CD8-positive, alpha-beta T cell (primary cell): ENCODE measurements at regions of chr11 and their contacts with region 1.

Region 1: GRCh38 chr11:73350908-73351636 is 25.1 kb upstream of the RELT start:
- DNase-seq: peak; percentile 36 to 84 (median 59)
- ATAC-seq: peak; percentile 98
- H3K4me3 ChIP-seq: no peak overlapping the region
- H3K4me3 Mint-ChIP-seq: no peak overlapping the region
- H3K27ac ChIP-seq: peak overlapping the region in 1 of 2 experiments; percentile 31
- H3K27ac Mint-ChIP-seq: no peak overlapping the region
- H3K4me1 ChIP-seq: no peaks in the 10 kb centered on the region
- H3K4me1 Mint-ChIP-seq: peaks cover 4% of the 10 kb centered on the region
- H3K27me3 ChIP-seq: no peaks in the 10 kb centered on the region
- H3K27me3 Mint-ChIP-seq: peaks cover 4% of the 10 kb centered on the region
- CTCF ChIP-seq: peak; percentile 99

Region 2: DNA sequence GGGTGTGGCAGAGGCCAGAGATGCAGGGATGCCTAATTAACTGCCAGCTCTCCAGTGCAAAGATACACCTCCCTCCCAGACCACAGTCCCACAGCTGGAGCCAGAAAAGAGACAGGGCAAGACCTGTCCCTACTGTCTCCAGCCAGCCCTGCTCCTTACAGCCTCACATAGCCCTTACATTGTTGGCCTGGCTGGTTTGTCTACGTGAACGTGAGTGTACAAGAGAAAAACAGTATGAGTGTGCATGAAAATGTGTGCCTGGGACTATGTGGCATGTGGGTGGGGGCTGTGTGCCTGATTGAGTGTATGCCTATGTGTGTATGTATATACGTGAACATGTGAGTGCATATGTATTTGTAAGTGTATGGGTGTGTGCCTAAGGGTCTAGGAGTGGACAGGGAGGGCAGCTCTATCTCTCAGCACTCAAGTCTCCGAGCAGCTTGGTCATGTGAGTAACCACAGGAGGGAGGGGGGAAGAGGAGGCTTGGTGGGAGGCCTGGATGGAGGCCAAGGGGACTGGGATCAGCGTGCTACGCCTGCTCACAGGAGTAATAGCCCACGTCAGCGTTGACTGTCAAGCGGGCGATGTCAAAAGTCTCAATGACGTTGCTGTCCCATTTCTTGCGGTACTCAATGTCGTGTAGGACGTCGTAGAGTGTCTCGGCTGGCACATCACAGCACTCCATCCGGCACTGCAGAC is 592.2 kb before region 1 on chr11:
- CTCF ChIA-PET with region 1: no interaction called
- POLR2A ChIA-PET with region 1: no interaction called
- intact Hi-C with region 1: no loop called
- DNase-seq: no peak
- ATAC-seq: no peak
- H3K4me3 ChIP-seq: no peak overlapping the region
- H3K4me3 Mint-ChIP-seq: no peak overlapping the region
- H3K27ac ChIP-seq: no peak overlapping the region
- H3K27ac Mint-ChIP-seq: no peak overlapping the region
- H3K4me1 ChIP-seq: no peaks in the 10 kb centered on the region
- H3K4me1 Mint-ChIP-seq: no peaks in the 10 kb centered on the region
- H3K27me3 ChIP-seq: no peaks in the 10 kb centered on the region
- H3K27me3 Mint-ChIP-seq: no peaks in the 10 kb centered on the region
- CTCF ChIP-seq: no peak

Region 3: DNA sequence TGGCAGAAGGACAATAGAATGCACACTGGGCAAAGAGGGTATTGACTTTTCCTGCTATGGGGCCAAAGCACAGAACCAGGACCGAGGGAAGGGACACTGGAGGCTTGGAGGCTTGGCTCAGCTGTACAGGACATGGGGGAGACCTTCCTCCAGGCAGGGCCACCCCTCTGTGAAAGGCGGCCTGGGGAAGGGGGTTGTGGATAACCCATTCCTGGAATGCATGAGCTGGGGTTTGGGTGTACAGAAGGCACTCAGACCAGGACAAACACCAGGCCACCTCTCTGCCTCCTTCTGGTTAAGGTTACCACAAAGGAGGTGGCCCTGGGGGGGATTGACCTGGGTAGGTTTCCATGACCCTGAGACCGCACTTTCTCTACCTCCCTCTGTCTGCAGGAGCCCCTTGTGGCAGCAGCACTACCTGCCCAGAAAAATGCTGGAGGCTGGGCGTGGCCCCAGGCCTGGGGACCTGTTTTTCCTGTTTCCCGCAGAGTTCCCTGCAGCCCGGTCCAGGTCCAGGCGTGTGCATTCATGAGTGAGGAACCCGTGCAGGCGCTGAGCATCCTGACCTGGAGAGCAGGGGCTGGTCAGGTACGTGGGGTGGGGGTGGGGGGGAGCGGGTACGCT is 123.4 kb before region 1 on chr11:
- CTCF ChIA-PET with region 1: no interaction called
- POLR2A ChIA-PET with region 1: no interaction called
- intact Hi-C with region 1: no loop called
- DNase-seq: no peak
- ATAC-seq: no peak
- H3K4me3 ChIP-seq: no peak overlapping the region
- H3K4me3 Mint-ChIP-seq: no peak overlapping the region
- H3K27ac ChIP-seq: no peak overlapping the region
- H3K27ac Mint-ChIP-seq: no peak overlapping the region
- H3K4me1 ChIP-seq: no peaks in the 10 kb centered on the region
- H3K4me1 Mint-ChIP-seq: no peaks in the 10 kb centered on the region
- H3K27me3 ChIP-seq: no peaks in the 10 kb centered on the region
- H3K27me3 Mint-ChIP-seq: peaks cover 9% of the 10 kb centered on the region
- CTCF ChIP-seq: no peak

Region 4: GRCh38 chr11:73307323-73308002 is 43.6 kb before region 1 on chr11:
- CTCF ChIA-PET with region 1: interaction called, 10 read pairs
- POLR2A ChIA-PET with region 1: no interaction called
- intact Hi-C with region 1: no loop called
- DNase-seq: peak; percentile 77 to 94 (median 89)
- ATAC-seq: peak; percentile 71
- H3K4me3 ChIP-seq: peak overlapping the region; percentile 62 to 77
- H3K4me3 Mint-ChIP-seq: peak overlapping the region; percentile 86
- H3K27ac ChIP-seq: no peak overlapping the region
- H3K27ac Mint-ChIP-seq: no peak overlapping the region
- H3K4me1 ChIP-seq: peaks cover 9% of the 10 kb centered on the region
- H3K4me1 Mint-ChIP-seq: peaks cover 10% of the 10 kb centered on the region
- H3K27me3 ChIP-seq: peaks cover 11 to 12% of the 10 kb centered on the region in 2 experiments
- H3K27me3 Mint-ChIP-seq: peaks cover 15% of the 10 kb centered on the region
- CTCF ChIP-seq: peak; percentile 46

Region 5: DNA sequence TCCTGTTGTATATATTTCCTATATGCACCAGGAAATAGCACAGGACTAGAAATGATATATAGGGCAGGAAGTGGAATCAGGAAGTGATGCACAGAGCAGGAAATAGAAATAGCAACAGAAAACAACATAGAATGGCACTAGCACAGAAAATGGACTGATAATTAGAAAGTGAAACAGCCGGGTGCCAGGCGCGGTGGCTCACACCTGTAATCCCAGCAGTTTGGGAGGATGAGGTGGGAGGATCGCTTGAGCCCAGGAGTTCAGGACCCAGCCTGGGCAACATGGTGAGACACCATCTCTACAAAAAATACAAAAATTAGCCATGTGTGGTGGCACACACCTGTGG is 15.2 kb after region 1 on chr11:
- CTCF ChIA-PET with region 1: interaction called, 130 read pairs
- POLR2A ChIA-PET with region 1: interaction called, 11 read pairs
- intact Hi-C with region 1: no loop called
- DNase-seq: peak in 6 of 9 experiments; percentile 23 to 81 (median 58)
- ATAC-seq: peak; percentile 92
- H3K4me3 ChIP-seq: peak overlapping the region; percentile 18 to 27
- H3K4me3 Mint-ChIP-seq: peak overlapping the region; percentile 68
- H3K27ac ChIP-seq: peak overlapping the region; percentile 65 to 86
- H3K27ac Mint-ChIP-seq: peak overlapping the region; percentile 94
- H3K4me1 ChIP-seq: peaks cover 29% of the 10 kb centered on the region
- H3K4me1 Mint-ChIP-seq: peaks cover 35% of the 10 kb centered on the region
- H3K27me3 ChIP-seq: no peaks in the 10 kb centered on the region
- H3K27me3 Mint-ChIP-seq: no peaks in the 10 kb centered on the region
- CTCF ChIP-seq: no peak

Region 6: DNA sequence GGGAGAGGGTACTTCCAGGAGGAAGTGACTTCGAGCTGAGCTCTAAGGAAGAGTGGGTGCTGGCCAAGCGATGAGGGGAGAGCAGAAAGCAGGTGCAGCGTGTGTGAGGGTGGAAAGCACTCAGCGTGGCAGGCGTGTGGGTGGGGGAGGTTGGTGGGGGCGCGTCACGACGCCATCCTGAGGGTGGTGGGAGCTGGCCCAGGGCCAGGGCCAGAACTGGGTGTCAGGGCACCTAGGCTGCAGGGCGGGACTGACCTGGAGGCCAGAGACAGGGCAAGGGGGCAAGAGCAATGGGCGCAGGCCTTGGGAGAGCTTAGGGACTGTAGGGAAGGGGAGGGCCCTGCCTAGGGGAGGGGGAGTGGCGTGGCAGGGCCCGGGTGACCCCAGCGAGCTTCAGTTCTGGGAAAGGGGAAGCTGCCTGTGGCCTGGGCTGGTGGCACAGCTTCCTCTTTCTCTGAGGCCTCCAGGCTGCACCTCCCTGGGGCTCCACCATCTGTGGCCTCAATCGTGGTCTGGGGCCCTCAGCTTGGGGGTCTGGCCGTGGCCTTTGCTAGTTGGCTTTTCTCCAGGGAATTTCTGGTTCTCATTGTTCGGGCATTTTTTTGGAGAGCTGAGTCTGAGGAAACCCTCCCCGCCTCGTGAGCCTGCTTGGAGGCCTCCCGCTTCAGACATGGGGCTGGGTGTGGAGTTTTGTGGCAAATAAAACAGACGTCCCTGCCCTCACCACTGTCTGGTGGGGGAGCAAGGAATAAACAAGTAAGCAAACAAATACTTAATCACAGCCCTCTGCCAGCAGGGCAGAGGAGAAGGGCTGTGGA is 34.0 kb after region 1 on chr11:
- CTCF ChIA-PET with region 1: interaction called, 233 read pairs
- POLR2A ChIA-PET with region 1: no interaction called
- intact Hi-C with region 1: no loop called
- DNase-seq: peak in 4 of 9 experiments; percentile 23 to 53 (median 42)
- ATAC-seq: peak; percentile 39
- H3K4me3 ChIP-seq: no peak overlapping the region
- H3K4me3 Mint-ChIP-seq: peak overlapping the region; percentile 37
- H3K27ac ChIP-seq: no peak overlapping the region
- H3K27ac Mint-ChIP-seq: peak overlapping the region; percentile 66
- H3K4me1 ChIP-seq: peaks cover 43% of the 10 kb centered on the region
- H3K4me1 Mint-ChIP-seq: peaks cover 62% of the 10 kb centered on the region
- H3K27me3 ChIP-seq: no peaks in the 10 kb centered on the region
- H3K27me3 Mint-ChIP-seq: no peaks in the 10 kb centered on the region
- CTCF ChIP-seq: no peak

Region 7: GRCh38 chr11:73404048-73404447 is 53.0 kb after region 1 on chr11:
- CTCF ChIA-PET with region 1: interaction called, 36 read pairs
- POLR2A ChIA-PET with region 1: no interaction called
- intact Hi-C with region 1: no loop called
- DNase-seq: peak in 1 of 9 experiments; percentile 22
- ATAC-seq: no peak
- H3K4me3 ChIP-seq: no peak overlapping the region
- H3K4me3 Mint-ChIP-seq: no peak overlapping the region
- H3K27ac ChIP-seq: no peak overlapping the region
- H3K27ac Mint-ChIP-seq: no peak overlapping the region
- H3K4me1 ChIP-seq: no peaks in the 10 kb centered on the region
- H3K4me1 Mint-ChIP-seq: no peaks in the 10 kb centered on the region
- H3K27me3 ChIP-seq: no peaks in the 10 kb centered on the region
- H3K27me3 Mint-ChIP-seq: no peaks in the 10 kb centered on the region
- CTCF ChIP-seq: no peak

Region 8: DNA sequence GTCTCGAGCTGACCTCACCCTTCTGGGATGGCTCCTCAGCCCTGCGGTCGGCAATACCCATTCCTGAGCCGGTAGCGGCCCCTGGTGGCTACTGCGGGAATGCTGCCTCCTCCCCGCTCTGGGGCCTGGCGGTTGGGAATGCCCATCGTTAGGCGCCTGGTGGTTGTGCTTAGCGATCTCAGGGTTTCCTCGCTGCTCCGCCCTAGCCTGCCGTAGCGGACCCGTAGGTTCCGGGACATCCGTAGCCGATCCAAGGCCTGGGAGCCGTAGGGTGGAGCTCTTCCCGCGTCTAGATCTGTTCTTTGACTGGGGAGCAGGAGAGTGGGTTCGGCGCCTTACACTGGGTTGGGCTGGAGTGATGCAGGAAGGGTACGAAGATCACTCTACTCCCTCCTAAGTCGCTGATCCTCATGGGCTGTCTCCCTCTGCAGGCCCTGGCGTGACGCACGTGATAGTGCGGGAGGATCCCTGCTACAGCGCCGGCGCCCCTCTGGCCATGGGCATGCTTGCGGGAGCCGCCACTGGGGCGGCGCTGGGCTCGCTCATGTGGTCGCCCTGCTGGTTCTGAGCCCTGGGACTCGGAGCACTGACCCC is 310.1 kb after region 1 on chr11:
- CTCF ChIA-PET with region 1: interaction called, 53 read pairs
- POLR2A ChIA-PET with region 1: no interaction called
- intact Hi-C with region 1: loop called (anchors 1 kb)
- DNase-seq: peak; percentile 70 to 91 (median 84)
- ATAC-seq: peak; percentile 95
- H3K4me3 ChIP-seq: peak overlapping the region in 1 of 2 experiments; percentile 25
- H3K4me3 Mint-ChIP-seq: peak overlapping the region; percentile 39
- H3K27ac ChIP-seq: no peak overlapping the region
- H3K27ac Mint-ChIP-seq: no peak overlapping the region
- H3K4me1 ChIP-seq: peaks cover 8% of the 10 kb centered on the region
- H3K4me1 Mint-ChIP-seq: peaks cover 17% of the 10 kb centered on the region
- H3K27me3 ChIP-seq: no peaks in the 10 kb centered on the region
- H3K27me3 Mint-ChIP-seq: no peaks in the 10 kb centered on the region
- CTCF ChIP-seq: peak; percentile 95